ENCODE measurements at regions of chr4 and their contacts with region 1.

Region 1: GRCh38 chr4:112674376-112674775 is 37.4 kb downstream of the LARP7 start:
- DNase-seq: no peak
- ATAC-seq: no peak
- H3K4me3 ChIP-seq: no peak overlapping the region
- H3K27ac ChIP-seq: peak overlapping the region in 6 of 10 donors; percentile 16 to 94 (median 87)
- H3K4me1 ChIP-seq: peaks cover 0 to 23% (median 6%) of the 10 kb centered on the region in 9 donors
- H3K27me3 ChIP-seq: no peaks in the 10 kb centered on the region
- CTCF ChIP-seq: no peak

Region 2: GRCh38 chr4:112648263-112649054 is 25.9 kb before region 1 on chr4:
- intact Hi-C with region 1: loop called in 1 of 10 experiments (anchors 2 kb)
- DNase-seq: no peak
- ATAC-seq: no peak
- H3K4me3 ChIP-seq: no peak overlapping the region
- H3K27ac ChIP-seq: peak overlapping the region in 4 of 10 donors; percentile 14 to 51 (median 31)
- H3K4me1 ChIP-seq: peaks cover 0 to 5% (median 0%) of the 10 kb centered on the region in 9 donors
- H3K27me3 ChIP-seq: no peaks in the 10 kb centered on the region
- CTCF ChIP-seq: no peak

Region 3: DNA sequence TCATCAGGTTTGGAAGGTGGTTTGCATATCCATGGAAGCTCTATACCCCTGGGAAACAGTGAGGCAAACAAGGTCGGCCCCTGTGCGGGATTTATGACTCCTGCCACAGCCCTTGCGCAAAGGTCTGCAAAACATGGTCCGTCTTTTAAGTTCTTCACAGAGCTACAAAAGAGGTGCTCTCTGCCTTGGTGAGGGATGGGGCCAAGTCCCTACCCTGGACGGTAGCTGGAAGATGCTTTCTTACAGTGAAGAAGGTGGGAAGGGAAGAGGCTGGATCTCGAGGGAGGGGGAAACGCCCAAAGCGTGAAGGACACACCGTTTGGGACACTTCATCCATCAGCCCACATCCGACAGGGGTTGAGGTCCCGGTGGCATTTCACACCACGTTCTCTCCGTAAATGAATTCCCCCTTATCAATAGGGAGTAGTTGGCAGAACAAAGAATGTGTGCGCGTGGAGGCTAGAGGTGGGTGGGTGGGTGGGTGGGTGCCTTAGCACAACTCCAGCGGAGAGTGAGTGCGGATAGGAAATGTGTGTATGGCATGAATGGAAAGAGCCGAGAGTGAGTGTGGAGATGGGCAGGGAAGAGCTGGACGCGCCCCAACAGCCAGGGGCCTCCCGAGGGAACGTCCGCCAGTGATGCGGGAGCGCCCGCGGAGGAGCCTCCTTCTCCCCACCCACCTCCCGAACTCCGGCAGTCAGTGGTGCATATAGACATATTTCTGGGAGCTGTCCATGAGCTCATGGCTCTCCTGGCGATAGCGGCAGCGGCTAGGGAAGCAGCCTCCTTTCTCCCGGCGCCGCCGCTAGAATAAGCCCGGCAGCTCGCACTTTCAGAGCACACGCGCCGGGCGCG is 30.8 kb after region 1 on chr4:
- intact Hi-C with region 1: loop called in 1 of 10 experiments (anchors 5 kb)
- DNase-seq: peak; percentile 38 to 46
- ATAC-seq: peak; percentile 76 to 86 (median 83)
- H3K4me3 ChIP-seq: peak overlapping the region in 9 of 10 donors; percentile 52 to 70 (median 60)
- H3K27ac ChIP-seq: peak overlapping the region in 8 of 10 donors; percentile 44 to 82 (median 70)
- H3K4me1 ChIP-seq: peaks cover 0 to 15% (median 4%) of the 10 kb centered on the region in 9 donors
- H3K27me3 ChIP-seq: peaks cover 0 to 66% (median 22%) of the 10 kb centered on the region in 7 donors
- CTCF ChIP-seq: no peak

Region 4: DNA sequence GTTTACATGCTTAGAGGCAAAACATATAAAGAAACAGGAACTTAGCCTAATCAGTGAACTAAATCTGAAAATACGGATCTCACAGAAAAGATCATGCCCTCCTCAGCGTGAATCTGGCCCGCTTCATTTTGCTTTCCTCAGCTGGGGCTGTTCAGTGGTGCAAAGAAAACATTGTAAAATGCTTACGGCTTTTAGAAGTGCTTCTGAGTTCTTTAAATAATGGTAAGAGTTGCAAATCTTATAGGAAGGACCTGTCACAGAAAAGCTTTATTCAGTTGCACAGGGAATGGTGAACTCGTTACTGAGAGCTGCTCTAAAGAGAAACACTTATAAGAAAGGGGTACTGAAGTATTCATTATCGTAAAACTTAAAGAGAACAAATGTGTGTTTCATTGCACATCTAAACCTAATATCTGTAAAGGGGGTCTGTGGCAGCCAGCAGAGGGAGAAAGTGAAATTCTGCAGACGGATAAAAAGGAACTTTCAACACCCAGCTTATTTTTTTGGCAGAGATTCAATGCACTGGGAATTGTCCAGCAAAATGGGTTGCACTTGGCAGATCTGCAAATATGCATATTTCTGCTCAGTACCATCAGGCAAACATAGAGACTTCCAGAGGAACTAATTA is 235.8 kb after region 1 on chr4:
- intact Hi-C with region 1: no loop called
- DNase-seq: peak in 1 of 2 donors; percentile 11
- ATAC-seq: peak in 6 of 8 donors; percentile 18 to 61 (median 50)
- H3K4me3 ChIP-seq: peak overlapping the region in 8 of 10 donors; percentile 13 to 43 (median 34)
- H3K27ac ChIP-seq: peak overlapping the region in 2 of 10 donors; percentile 2 to 12
- H3K4me1 ChIP-seq: peaks cover 0 to 20% (median 5%) of the 10 kb centered on the region in 9 donors
- H3K27me3 ChIP-seq: no peaks in the 10 kb centered on the region
- CTCF ChIP-seq: peak in 5 of 9 donors; percentile 10 to 32 (median 29)

Region 5: GRCh38 chr4:112994732-112995464 is 320.5 kb after region 1 on chr4:
- intact Hi-C with region 1: no loop called
- DNase-seq: no peak
- ATAC-seq: no peak
- H3K4me3 ChIP-seq: no peak overlapping the region
- H3K27ac ChIP-seq: no peak overlapping the region
- H3K4me1 ChIP-seq: no peaks in the 10 kb centered on the region
- H3K27me3 ChIP-seq: no peaks in the 10 kb centered on the region
- CTCF ChIP-seq: no peak

Measured in heart right ventricle (tissue), 16 donors.